ENCODE measurements at regions of chr6 and their contacts with region 1.

Region 1: DNA sequence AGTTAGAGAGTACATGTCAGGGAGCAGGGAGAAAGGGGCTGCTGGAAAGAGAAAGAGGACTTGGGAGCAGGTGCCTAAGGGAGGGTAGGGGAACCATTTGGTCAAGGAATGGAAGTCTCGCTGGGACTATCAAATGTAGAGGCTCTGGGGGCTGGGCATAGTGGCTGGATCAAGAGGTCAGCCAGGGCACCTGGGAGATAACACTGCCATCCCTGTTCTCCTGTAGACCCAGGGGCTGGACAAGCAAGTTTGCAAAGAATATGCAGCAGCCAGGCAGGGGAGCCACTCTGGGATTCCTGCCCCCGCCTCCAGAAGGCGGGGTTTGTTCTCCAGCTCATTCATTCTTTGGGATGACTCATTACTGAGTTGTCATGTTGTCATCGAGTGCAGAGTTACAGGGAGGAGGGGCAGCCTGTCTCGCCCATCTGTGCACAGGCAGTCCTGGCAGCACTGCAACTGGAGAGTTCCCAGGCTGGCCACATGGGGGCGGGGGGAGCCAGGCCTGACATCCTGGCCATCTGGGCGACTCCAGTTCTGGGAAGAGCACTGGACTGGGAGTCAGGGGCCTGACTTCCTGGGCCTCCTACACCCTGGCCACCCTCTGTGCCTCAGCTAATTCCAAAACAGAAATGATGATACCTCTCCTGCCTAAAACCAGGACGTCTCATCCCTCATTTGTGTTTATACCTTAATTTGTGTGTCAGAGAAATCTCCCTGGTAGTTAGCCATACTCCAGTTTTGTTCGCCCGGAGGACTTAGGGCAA is 28.2 kb upstream of the ZFAND3 start:
- DNase-seq: peak; percentile 76 to 80
- ATAC-seq: peak; percentile 95 to 100 (median 99)
- H3K4me3 ChIP-seq: no peak overlapping the region
- H3K4me3 Mint-ChIP-seq: no peak overlapping the region
- H3K27ac ChIP-seq: no peak overlapping the region
- H3K27ac Mint-ChIP-seq: peak overlapping the region; percentile 9 to 74
- H3K4me1 ChIP-seq: peaks cover 8% of the 10 kb centered on the region
- H3K4me1 Mint-ChIP-seq: peaks cover 0 to 11% of the 10 kb centered on the region in 2 donors
- H3K27me3 ChIP-seq: no peaks in the 10 kb centered on the region
- H3K27me3 Mint-ChIP-seq: peaks cover 0 to 6% of the 10 kb centered on the region in 2 donors
- CTCF ChIP-seq: peak; percentile 93

Region 2: GRCh38 chr6:37860226-37860839 is 69.0 kb after region 1 on chr6:
- intact Hi-C with region 1: loop called (anchors 2 kb)
- DNase-seq: peak in 1 of 2 donors; percentile 67
- ATAC-seq: no peak
- H3K4me3 ChIP-seq: no peak overlapping the region
- H3K4me3 Mint-ChIP-seq: no peak overlapping the region
- H3K27ac ChIP-seq: no peak overlapping the region
- H3K27ac Mint-ChIP-seq: no peak overlapping the region
- H3K4me1 ChIP-seq: peaks cover 19% of the 10 kb centered on the region
- H3K4me1 Mint-ChIP-seq: peaks cover 61 to 70% of the 10 kb centered on the region in 2 donors
- H3K27me3 ChIP-seq: no peaks in the 10 kb centered on the region
- H3K27me3 Mint-ChIP-seq: no peaks in the 10 kb centered on the region
- CTCF ChIP-seq: peak; percentile 45

Region 3: DNA sequence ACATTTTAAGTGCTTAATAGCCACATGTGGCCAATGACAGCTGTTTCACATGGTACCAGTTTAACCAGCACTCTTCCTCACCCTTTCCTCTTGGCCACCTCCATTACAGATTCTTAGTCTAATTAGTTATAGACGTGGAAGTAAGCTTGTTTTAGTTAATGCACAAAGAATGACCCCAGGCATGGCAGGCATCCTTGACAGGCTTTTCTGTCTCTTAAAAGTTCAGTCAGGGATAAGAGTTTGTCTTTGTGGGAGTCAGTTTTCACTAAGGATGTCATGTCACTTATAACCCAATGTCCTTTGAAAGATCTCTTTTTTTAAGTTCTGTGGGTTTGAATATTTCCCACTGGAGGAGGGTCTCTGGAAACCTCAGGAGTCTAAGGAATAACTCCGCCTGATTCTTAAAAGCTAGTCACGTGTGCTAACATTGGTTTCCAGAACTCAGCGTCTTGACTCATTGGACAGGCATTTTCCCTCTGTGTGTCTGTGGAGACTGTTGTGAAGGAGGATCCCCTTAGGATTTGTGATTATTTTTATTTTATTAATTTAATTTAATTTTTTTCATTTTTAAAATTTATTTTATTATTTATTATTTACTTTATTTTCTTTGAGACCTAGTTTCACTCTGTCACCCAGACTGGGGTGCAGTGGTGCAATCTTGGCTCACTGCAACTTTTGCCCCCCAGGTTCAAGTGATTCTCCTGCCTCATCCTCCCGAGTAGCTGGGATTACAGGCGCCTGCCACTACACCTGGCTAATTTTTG is 199.6 kb after region 1 on chr6:
- intact Hi-C with region 1: no loop called
- DNase-seq: no peak
- ATAC-seq: no peak
- H3K4me3 ChIP-seq: no peak overlapping the region
- H3K4me3 Mint-ChIP-seq: no peak overlapping the region
- H3K27ac ChIP-seq: no peak overlapping the region
- H3K27ac Mint-ChIP-seq: no peak overlapping the region
- H3K4me1 ChIP-seq: no peaks in the 10 kb centered on the region
- H3K4me1 Mint-ChIP-seq: peaks cover 66 to 67% of the 10 kb centered on the region in 2 donors
- H3K27me3 ChIP-seq: no peaks in the 10 kb centered on the region
- H3K27me3 Mint-ChIP-seq: no peaks in the 10 kb centered on the region
- CTCF ChIP-seq: no peak

Region 4: DNA sequence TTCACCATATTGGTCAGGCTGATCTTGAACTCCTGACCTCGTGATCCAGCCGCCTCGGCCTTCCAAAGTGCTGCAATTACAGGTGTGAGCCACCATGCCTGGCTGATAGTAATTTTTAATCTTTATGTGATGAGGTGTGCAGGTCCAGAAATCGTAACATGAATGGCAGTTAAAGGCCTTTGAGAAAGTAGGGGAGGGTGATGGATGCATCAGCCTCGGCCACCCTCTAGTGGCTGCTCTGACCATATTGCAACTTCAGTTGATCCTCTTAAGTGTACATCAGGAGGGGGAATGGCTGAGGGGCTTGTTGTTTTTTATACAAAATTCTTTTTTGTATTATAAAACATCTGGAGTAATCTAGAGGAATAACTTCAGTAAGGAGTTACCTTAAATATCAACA is 221.2 kb after region 1 on chr6:
- intact Hi-C with region 1: loop called (anchors 1 kb)
- DNase-seq: peak; percentile 19 to 53
- ATAC-seq: peak in 2 of 3 donors; percentile 80 to 85
- H3K4me3 ChIP-seq: no peak overlapping the region
- H3K4me3 Mint-ChIP-seq: no peak overlapping the region
- H3K27ac ChIP-seq: no peak overlapping the region
- H3K27ac Mint-ChIP-seq: no peak overlapping the region
- H3K4me1 ChIP-seq: no peaks in the 10 kb centered on the region
- H3K4me1 Mint-ChIP-seq: peaks cover 38 to 50% of the 10 kb centered on the region in 2 donors
- H3K27me3 ChIP-seq: no peaks in the 10 kb centered on the region
- H3K27me3 Mint-ChIP-seq: no peaks in the 10 kb centered on the region
- CTCF ChIP-seq: peak; percentile 67

Region 5: DNA sequence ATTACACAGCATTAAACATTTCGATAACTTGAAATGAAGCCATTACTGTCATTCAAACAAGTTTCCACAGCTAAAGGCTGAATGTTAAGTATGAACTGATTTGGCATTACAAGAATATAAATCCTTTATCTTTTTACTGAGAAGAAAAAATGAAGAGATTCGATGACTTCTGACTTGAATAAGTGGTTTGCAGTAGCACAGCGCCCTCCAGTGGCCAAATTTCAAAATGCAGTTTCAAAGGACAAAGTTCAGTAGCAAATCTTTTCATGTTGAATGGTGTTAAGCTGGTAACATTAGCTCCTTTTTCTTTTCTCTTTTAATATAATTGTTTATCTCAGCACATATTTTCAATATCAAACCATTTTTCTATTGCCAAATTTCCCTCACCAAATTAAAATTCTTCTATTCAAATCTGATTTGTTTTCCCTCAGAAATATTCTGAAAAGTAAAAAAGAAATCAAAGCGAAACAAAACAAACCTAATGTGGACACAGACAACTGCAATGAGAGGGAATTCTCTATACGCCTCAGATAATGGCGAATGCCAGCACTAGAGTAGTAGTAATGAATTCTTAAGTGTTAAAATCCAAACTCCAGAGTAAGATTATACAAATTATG is 702.7 kb after region 1 on chr6:
- intact Hi-C with region 1: loop called (anchors 5 kb)
- DNase-seq: peak; percentile 71 to 85
- ATAC-seq: peak; percentile 43 to 70 (median 58)
- H3K4me3 ChIP-seq: no peak overlapping the region
- H3K4me3 Mint-ChIP-seq: no peak overlapping the region
- H3K27ac ChIP-seq: no peak overlapping the region
- H3K27ac Mint-ChIP-seq: no peak overlapping the region
- H3K4me1 ChIP-seq: peaks cover 11% of the 10 kb centered on the region
- H3K4me1 Mint-ChIP-seq: peaks cover 22 to 26% of the 10 kb centered on the region in 2 donors
- H3K27me3 ChIP-seq: no peaks in the 10 kb centered on the region
- H3K27me3 Mint-ChIP-seq: no peaks in the 10 kb centered on the region
- CTCF ChIP-seq: peak; percentile 98